HEK293 (cell line): ENCODE measurements at regions of chr9 and their contacts with region 1.

Region 1: GRCh38 chr9:137240861-137241489 is at the start of gene TUBB4B:
- H3K4me3 ChIP-seq: peak within 1 kb of the TSS; percentile 83
- H3K27ac ChIP-seq: peak within 1 kb of the TSS; percentile 93
- H3K4me1 ChIP-seq: peaks cover 6% of the 10 kb centered on the region; the same call in 1 of the 2 replicates
- CTCF ChIP-seq: no peak

Region 2: DNA sequence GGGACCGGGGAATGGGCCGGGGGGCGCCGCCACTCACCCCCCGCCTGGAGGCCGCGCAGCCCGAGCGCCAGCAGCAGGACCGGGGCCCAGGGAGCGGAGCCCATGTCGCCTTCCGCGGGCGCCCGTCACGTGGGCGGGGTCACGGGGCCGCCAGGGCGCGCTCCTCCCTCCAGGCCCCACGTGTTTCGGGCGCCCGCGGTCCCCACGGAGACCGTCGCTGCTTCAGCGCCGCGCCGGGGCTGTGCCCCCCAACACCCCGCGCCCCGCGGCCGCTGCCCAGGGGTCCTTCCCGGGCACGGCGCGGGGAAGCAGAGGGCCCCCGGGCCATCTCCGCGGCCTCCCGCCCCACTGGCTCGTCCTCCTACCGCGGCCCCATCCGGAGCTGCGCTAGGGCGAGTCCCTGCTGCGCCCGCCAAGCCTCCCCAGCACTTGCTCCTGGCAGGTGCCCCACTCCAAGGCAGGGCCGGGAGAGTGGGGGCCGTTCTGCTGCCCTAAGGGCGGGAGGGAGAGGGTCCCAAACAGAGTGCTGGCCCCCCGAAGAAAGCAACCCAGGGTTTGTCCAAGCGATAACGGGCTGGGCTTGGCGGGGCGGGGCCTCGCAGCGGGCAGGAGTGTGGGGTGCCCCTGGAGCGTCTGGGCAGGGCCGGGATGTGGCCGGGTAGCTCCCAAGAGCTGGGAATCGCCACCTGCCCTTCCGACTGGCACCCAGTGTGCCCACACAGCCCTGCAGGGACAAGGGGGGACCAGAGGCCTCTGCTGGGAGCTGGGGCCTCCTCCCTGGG is 126.2 kb before region 1 on chr9 and contains the start of gene DPP7:
- CTCF ChIA-PET with region 1: interaction called, 36 read pairs
- POLR2A ChIA-PET with region 1: interaction called, 6 read pairs
- H3K4me3 ChIP-seq: peak within 1 kb of the TSS; percentile 4
- H3K27ac ChIP-seq: no peak within 1 kb of the TSS
- H3K4me1 ChIP-seq: no peaks in the 10 kb centered on the region
- CTCF ChIP-seq: no peak

Region 3: GRCh38 chr9:137168905-137169856 is 71.8 kb before region 1 on chr9:
- CTCF ChIA-PET with region 1: interaction called, 7 read pairs
- POLR2A ChIA-PET with region 1: interaction called, 14 read pairs
- H3K4me3 ChIP-seq: peak overlapping the region; percentile 40
- H3K27ac ChIP-seq: no peak overlapping the region; the same call in 1 of the 2 replicates
- H3K4me1 ChIP-seq: no peaks in the 10 kb centered on the region; the same call in 1 of the 2 replicates
- CTCF ChIP-seq: peak; percentile 64

Region 4: DNA sequence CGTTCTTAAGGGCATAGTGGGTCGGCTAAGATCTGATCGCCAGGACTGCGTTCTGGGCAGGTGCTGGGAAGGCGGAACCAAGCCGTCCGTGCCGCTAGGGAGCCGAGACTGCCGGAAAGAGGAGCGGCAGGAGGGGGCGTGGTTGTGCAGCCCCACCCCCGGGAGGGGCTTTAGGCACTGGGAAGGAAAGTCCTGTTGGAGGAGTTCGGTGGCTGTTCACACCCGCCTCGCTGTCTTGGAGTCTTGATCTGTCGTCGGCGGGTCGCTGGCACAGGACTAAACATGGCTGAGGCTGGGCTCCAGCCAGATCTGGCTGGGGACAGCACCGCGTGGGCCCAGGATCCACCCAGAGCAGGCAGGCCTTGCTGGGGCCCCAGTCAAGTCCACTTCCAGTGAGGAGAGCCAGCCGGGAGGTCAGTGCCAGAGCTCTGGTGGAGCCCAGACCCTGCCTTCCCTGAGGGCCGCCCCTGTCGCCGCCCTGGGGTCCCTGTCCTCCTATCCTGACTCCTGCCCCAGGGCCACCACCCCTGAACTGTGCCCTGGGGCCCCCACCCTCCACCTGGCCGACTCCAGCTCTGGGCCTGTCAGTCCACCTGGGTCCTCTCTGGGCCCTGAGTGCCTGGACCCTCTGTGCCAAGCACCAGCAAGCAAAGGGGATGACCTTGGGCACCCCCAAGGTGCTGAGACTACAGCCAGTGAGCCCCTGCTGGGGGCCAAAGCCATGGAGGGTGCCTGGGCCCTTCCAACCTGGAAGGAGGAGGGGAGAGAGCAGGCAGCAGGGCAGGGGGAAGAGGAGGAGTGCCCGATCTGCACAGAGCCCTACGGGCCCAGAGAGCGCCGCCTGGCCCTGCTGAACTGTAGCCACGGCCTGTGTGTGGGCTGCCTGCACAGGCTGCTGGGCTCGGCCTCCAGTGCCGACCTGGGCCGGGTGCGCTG is 23.4 kb before region 1 on chr9:
- CTCF ChIA-PET with region 1: interaction called, 20 read pairs
- POLR2A ChIA-PET with region 1: interaction called, 234 read pairs
- H3K4me3 ChIP-seq: no peak overlapping the region
- H3K27ac ChIP-seq: no peak overlapping the region
- H3K4me1 ChIP-seq: no peaks in the 10 kb centered on the region; the same call in 1 of the 2 replicates
- CTCF ChIP-seq: peak; percentile 59

Region 5: DNA sequence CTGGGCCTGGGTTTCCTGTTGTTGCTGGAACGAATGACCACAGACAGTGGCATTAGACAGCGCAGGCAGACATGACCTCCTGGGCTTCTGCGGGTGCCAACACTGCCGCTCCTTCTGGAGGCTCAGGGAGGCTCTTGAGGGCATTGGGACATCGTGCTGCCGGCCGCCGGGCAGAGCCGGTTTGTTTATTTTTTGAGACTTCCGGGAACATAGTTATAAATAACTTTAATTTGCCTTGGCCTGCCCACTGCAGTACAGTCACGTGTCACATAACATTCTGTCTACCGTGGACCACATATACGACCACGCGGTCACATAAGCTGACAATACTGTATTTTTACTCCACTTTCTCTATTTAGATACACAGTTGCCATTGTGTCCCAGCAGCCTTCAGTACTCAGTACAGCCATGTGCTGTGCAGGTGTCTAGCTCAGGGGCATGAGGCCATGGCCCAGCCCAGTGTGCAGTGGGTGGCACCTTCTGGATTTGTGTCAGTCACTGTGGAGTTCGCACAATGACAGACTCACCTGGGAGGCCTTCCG is 28.3 kb after region 1 on chr9:
- CTCF ChIA-PET with region 1: interaction called, 37 read pairs
- POLR2A ChIA-PET with region 1: interaction called, 103 read pairs
- H3K4me3 ChIP-seq: no peak overlapping the region
- H3K27ac ChIP-seq: no peak overlapping the region
- H3K4me1 ChIP-seq: no peaks in the 10 kb centered on the region
- CTCF ChIP-seq: no peak

Region 6: DNA sequence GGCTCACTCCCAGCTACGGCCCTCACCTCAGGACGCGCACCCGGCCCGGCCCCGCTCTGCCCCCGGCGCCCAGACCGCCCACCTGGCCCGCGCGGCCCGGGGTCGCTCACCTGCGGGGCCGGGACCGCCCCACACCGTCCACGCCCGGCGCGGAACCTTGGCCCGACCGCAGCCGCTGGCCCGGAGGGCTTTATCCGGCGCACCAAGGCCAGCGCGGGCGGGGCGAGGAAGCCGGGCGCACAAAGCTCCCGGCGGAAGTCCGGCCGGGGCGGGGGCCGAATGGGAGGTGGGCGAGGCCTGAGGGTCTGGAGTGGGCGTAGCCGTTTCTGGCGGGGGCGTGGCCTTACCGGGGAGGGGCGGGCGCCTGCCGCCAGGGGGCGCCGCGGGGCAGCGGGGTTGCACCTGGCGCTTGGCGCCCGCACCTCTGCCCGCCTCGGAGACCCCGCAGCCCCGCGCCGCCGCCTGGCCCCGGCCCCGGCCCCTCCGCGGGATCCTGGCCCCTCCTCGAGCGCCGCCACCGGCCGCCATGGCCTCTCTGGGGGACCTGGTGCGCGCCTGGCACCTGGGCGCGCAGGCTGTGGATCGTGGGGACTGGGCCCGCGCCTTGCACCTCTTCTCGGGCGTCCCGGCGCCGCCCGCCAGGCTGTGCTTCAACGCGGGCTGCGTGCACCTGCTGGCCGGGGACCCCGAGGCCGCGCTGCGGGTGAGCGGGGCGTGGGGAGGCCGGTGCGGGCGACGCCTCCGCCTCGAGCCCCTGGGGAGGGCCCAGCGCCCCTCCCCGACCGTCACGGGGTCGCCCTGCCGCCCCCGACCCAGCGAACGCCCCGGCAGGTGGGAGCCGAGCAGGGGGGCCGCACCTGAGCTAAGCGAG is 182.3 kb after region 1 on chr9 and contains the starts of genes EXD3 and NOXA1:
- CTCF ChIA-PET with region 1: interaction called, 3 read pairs
- POLR2A ChIA-PET with region 1: interaction called, 15 read pairs
- H3K4me3 ChIP-seq: peak within 1 kb of the TSS; percentile 85
- H3K27ac ChIP-seq: peak within 1 kb of the TSS; percentile 86
- H3K4me1 ChIP-seq: peaks cover 9% of the 10 kb centered on the region
- CTCF ChIP-seq: peak; percentile 47; the same call in 1 of the 2 replicates